Heart right ventricle (tissue), 16 donors: ENCODE measurements at regions of chr19 and their contacts with region 1.

Region 1: GRCh38 chr19:52296773-52297600 is at the start of gene ZNF480:
- DNase-seq: peak; percentile 84 to 89
- ATAC-seq: peak; percentile 84 to 93 (median 90)
- H3K4me3 ChIP-seq: peak within 1 kb of the TSS; percentile 59 to 98 (median 85)
- H3K27ac ChIP-seq: peak within 1 kb of the TSS; percentile 82 to 98 (median 94)
- H3K4me1 ChIP-seq: peaks cover 0 to 22% (median 15%) of the 10 kb centered on the region in 9 donors
- H3K27me3 ChIP-seq: no peaks in the 10 kb centered on the region
- CTCF ChIP-seq: peak in 3 of 9 donors; percentile 15 to 31 (median 17)
- total RNA-seq, gene ZNF480: 11.4 to 19.6 (median 13.4) TPM

Region 2: DNA sequence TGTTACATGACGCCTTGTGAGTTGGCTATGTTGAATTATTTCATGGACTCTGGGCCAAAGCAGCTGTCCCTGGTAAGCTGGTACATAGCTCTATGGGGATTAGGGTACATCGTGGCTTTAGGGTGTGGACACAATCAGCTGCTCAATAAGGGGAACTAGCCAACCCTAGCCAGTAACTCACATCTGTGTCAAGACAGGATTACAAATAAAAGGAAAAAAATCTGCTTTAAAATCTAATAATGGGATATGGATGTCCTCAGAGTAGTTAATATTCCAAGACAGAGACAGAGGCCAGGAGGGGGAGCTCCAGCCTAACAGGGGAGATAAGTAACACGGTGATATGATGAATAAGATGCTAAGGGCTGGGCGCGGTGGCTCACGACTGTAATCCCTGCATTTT is 48.7 kb before region 1 on chr19:
- intact Hi-C with region 1: no loop called
- DNase-seq: peak; percentile 31 to 38
- ATAC-seq: peak in 5 of 8 donors; percentile 49 to 77 (median 67)
- H3K4me3 ChIP-seq: no peak overlapping the region
- H3K27ac ChIP-seq: no peak overlapping the region
- H3K4me1 ChIP-seq: no peaks in the 10 kb centered on the region
- H3K27me3 ChIP-seq: no peaks in the 10 kb centered on the region
- CTCF ChIP-seq: peak in 8 of 9 donors; percentile 20 to 60 (median 56)

Region 3: DNA sequence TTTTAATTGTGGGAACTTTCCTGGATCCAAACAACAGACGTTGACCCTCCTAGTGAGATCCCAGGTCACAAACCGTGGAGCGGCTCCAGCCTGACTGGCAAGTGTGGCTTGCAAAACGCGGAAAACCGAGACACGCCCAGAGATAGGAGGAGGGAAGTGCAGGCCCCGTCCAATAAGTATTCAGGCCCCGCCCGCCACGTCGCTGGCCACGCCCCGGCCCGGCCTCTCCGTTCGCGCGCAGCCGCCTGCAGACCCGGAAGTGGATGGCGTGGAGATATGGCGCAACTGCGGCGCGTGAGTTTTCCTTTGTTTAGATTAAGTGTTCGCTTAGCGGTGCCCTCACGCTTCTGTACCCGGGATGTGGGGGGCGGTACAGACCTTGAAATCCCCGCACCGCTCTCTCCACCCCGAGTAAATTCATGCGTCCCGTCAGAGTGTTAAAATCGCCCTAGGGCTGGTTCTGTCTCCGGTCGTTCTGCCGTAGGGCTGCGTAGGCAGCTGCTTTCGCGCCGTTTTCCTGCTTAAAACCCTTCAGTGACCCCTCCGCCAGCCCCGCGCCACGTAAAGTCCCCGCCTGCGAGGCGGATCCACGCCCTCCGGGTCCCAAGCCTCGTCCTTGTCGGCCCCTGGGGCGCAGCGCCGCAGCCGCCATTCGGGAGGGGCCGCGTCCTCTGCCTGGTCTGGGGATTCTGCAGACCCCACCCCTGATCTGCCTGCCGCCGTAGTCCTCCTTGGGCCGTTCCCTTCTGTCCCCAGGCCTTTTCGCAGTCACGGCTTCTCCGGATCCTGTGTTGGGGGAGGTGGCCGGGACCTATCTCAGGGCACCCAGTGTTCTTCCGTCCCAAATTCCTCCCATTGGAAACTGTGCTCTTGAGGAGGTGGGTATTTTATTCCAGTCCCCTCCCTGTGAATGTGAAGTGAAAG is 27.4 kb before region 1 on chr19 and contains the start of gene ZNF766:
- intact Hi-C with region 1: loop called in 3 of 10 experiments (anchors 1 to 2 kb)
- DNase-seq: peak; percentile 96 to 98
- ATAC-seq: peak; percentile 99 to 100 (median 100)
- H3K4me3 ChIP-seq: peak within 1 kb of the TSS; percentile 79 to 100 (median 92)
- H3K27ac ChIP-seq: peak within 1 kb of the TSS; percentile 78 to 99 (median 95)
- H3K4me1 ChIP-seq: peaks cover 4 to 28% (median 19%) of the 10 kb centered on the region in 9 donors
- H3K27me3 ChIP-seq: no peaks in the 10 kb centered on the region
- CTCF ChIP-seq: no peak
- total RNA-seq, gene ZNF766: 9.0 to 14.4 (median 10.5) TPM

Region 4: DNA sequence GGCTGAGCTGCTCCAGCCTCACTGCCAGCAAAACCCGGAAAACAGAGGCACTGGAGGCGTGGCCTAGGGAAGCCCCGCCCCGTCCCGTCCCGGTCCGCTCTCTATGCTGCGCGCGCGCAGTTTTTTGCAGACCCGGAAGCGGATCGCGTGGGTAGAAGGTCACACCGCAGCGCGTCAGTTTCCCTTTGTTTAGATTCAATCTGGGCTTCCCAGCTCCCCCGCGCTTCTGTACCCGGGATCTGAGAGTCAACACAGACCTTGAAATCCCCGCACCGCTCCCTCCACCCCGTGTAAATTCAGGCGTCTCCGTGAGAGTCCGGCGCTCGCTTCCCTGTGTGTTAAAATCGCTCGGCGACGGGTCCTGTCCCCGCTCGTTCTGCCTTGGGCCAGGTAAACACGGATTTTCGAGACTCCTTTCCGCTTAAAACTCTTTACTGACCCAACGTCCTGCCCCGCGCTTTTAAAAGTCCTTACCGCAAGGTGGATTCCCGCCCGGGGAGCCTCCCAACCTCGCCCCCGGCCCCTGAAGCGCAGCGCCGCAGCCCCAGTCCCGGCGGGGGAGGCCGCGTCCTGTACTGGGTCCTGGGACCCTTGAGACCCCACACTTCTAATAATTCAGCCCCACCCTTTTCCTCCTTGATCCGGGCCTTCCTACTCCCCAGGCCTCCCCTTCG is 39.3 kb after region 1 on chr19 and contains the start of gene ZNF610:
- intact Hi-C with region 1: loop called in 3 of 10 experiments (anchors 5 kb)
- DNase-seq: peak; percentile 92 to 94
- ATAC-seq: peak; percentile 99 to 100 (median 100)
- H3K4me3 ChIP-seq: peak within 1 kb of the TSS; percentile 61 to 99 (median 78)
- H3K27ac ChIP-seq: peak within 1 kb of the TSS; percentile 43 to 92 (median 86)
- H3K4me1 ChIP-seq: peaks cover 0 to 16% (median 0%) of the 10 kb centered on the region in 9 donors
- H3K27me3 ChIP-seq: no peaks in the 10 kb centered on the region
- CTCF ChIP-seq: no peak
- total RNA-seq, gene ZNF610: 2.1 to 6.8 (median 4.7) TPM